IMR-90 (cell line): ENCODE measurements at regions of chr12 and their contacts with region 1.

Region 1: DNA sequence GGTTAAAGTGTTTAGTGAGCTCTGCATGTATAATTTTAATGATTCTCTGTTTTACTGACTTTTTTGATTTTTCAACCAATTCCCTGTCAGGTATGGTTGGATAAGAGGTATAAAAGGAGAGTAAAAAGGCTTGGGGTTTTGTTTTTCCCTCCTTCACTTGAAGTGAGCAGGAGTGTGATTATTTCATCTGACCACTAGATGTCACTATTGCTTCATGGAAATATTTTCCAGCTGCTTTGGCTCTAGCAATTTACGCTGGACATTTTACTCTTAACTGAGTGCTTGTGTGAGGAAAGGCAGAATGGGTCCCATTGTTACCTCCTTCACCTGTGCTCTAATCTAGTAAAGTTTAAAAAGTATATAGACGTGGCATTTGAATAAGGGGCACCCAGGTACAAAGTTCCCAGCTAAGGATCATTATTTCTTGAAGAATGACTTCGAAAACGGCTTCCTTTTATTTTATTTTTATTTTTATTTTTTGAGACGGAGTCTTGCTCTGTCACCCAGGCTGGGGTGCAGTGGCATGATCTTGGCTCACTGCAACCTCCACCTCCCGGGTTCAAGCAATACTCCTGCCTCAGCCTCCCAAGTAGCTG is 66.5 kb downstream of the TBC1D30 start:
- DNase-seq: peak; percentile 70
- ATAC-seq: peak; percentile 67
- H3K4me3 ChIP-seq: no peak overlapping the region
- H3K27ac ChIP-seq: no peak overlapping the region
- H3K4me1 ChIP-seq: peaks cover 5% of the 10 kb centered on the region; the same call in 1 of the 2 replicates
- H3K27me3 ChIP-seq: peaks cover 14% of the 10 kb centered on the region; the same call in 1 of the 2 replicates
- CTCF ChIP-seq: peak; percentile 85
- POLR2A ChIP-seq: no peak
- RAD21 ChIP-seq: peak; percentile 92

Region 2: DNA sequence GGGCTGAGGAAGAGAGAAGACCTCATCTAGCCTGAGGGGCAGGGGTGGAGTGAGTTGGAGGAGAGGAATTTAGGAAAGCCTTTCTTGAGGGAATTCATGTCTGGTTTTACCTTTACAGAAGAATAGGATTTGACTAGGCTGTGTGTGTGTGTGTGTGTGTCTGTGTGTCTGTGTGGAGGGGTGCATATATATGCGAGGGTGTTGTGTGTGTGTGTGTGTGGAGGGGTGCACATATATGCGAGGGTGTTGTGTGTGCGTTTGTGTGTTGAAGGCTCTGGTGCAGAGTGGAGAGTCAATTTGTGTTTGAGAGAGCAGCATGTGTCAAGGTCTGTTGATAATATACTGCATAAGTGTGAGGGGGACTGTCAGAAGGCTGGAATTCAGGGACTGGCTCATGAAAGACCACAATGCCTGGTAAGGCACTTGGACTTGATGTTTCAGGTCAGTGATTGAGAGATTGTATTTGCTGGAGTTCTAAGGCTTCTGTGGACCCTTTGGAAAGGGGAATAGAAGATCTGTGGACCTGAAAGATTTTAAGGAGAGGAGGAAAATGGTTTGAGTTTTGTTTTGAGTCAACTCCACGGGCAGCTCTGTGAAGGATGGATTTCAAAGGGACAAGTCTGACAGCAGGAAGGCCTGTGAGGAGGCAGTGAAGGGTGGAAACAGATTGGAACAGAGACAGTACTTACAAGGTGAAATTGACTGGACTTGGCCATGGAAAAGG is 31.9 kb before region 1 on chr12:
- CTCF ChIA-PET with region 1: no interaction called
- POLR2A ChIA-PET with region 1: no interaction called
- dilution Hi-C with region 1: no loop called
- in situ Hi-C with region 1: no loop called
- intact Hi-C with region 1: no loop called
- DNase-seq: no peak
- ATAC-seq: no peak
- H3K4me3 ChIP-seq: no peak overlapping the region
- H3K27ac ChIP-seq: no peak overlapping the region
- H3K4me1 ChIP-seq: no peaks in the 10 kb centered on the region
- H3K27me3 ChIP-seq: peaks cover 14% of the 10 kb centered on the region
- CTCF ChIP-seq: no peak
- POLR2A ChIP-seq: no peak
- RAD21 ChIP-seq: no peak

Region 3: GRCh38 chr12:65121049-65121955 is 230.3 kb after region 1 on chr12 and contains the start of gene WIF1:
- CTCF ChIA-PET with region 1: interaction called, 3 read pairs
- POLR2A ChIA-PET with region 1: no interaction called
- dilution Hi-C with region 1: no loop called
- in situ Hi-C with region 1: no loop called
- intact Hi-C with region 1: loop called (anchors 1 kb)
- DNase-seq: no peak
- ATAC-seq: peak; percentile 51
- H3K4me3 ChIP-seq: peak within 1 kb of the TSS; percentile 25; the same call in 1 of the 2 replicates
- H3K27ac ChIP-seq: no peak within 1 kb of the TSS
- H3K4me1 ChIP-seq: peaks cover 3% of the 10 kb centered on the region
- H3K27me3 ChIP-seq: peaks cover 49% of the 10 kb centered on the region
- CTCF ChIP-seq: peak; percentile 32; the same call in 1 of the 2 replicates
- POLR2A ChIP-seq: no peak
- RAD21 ChIP-seq: no peak
- total RNA-seq, gene WIF1: not detected in 2 replicates

Region 4: GRCh38 chr12:65278576-65279368 is 387.8 kb after region 1 on chr12 and contains the start of gene MSRB3:
- CTCF ChIA-PET with region 1: no interaction called
- POLR2A ChIA-PET with region 1: no interaction called
- dilution Hi-C with region 1: no loop called
- in situ Hi-C with region 1: no loop called
- intact Hi-C with region 1: loop called (anchors 5 kb)
- DNase-seq: peak; percentile 70
- ATAC-seq: peak; percentile 90
- H3K4me3 ChIP-seq: peak within 1 kb of the TSS; percentile 99
- H3K27ac ChIP-seq: peak within 1 kb of the TSS; percentile 100
- H3K4me1 ChIP-seq: peaks cover 7% of the 10 kb centered on the region
- H3K27me3 ChIP-seq: no peaks in the 10 kb centered on the region
- CTCF ChIP-seq: no peak
- POLR2A ChIP-seq: no peak; the same call in 1 of the 2 replicates
- RAD21 ChIP-seq: no peak
- total RNA-seq, gene MSRB3: 31.7 and 40.8 TPM in 2 replicates

Region 5: GRCh38 chr12:65313719-65314317 is 422.8 kb after region 1 on chr12:
- CTCF ChIA-PET with region 1: no interaction called
- POLR2A ChIA-PET with region 1: no interaction called
- dilution Hi-C with region 1: no loop called
- in situ Hi-C with region 1: no loop called
- intact Hi-C with region 1: no loop called
- DNase-seq: peak; percentile 47
- ATAC-seq: peak; percentile 32; the same call in 1 of the 2 replicates
- H3K4me3 ChIP-seq: no peak overlapping the region
- H3K27ac ChIP-seq: no peak overlapping the region
- H3K4me1 ChIP-seq: 0 out of 2 replicates have a peak, but pooled peaks cover 1% of the 10 kb centered on the region
- H3K27me3 ChIP-seq: no peaks in the 10 kb centered on the region
- CTCF ChIP-seq: peak; percentile 62
- POLR2A ChIP-seq: no peak
- RAD21 ChIP-seq: peak; percentile 74

Region 6: DNA sequence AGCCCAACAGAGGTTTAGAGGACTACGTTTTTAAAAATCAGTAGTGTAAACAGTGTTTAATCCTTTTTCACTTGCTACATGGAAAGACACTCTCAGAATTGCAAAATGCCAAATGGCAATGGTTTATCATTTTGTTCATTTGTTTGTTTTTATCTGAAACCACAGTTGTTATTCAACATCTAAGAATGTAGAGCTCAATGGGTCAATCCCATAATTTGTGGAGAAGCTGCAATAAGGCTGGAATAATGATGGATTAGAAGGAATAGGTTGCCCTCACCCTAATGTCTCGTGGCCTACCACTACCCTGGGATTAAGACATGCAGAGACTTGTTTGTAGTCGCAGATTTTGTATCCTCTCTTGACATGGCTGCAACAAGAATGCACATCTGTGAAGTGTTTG is 1123.8 kb after region 1 on chr12:
- CTCF ChIA-PET with region 1: no interaction called
- POLR2A ChIA-PET with region 1: no interaction called
- dilution Hi-C with region 1: no loop called
- in situ Hi-C with region 1: loop called (anchors 25 kb)
- intact Hi-C with region 1: no loop called
- DNase-seq: peak; percentile 71
- ATAC-seq: peak; percentile 59
- H3K4me3 ChIP-seq: no peak overlapping the region
- H3K27ac ChIP-seq: peak overlapping the region; percentile 18; the same call in 1 of the 2 replicates
- H3K4me1 ChIP-seq: peaks cover 17% of the 10 kb centered on the region
- H3K27me3 ChIP-seq: peaks cover 4% of the 10 kb centered on the region; the same call in 1 of the 2 replicates
- CTCF ChIP-seq: no peak
- POLR2A ChIP-seq: no peak
- RAD21 ChIP-seq: no peak

Region 7: DNA sequence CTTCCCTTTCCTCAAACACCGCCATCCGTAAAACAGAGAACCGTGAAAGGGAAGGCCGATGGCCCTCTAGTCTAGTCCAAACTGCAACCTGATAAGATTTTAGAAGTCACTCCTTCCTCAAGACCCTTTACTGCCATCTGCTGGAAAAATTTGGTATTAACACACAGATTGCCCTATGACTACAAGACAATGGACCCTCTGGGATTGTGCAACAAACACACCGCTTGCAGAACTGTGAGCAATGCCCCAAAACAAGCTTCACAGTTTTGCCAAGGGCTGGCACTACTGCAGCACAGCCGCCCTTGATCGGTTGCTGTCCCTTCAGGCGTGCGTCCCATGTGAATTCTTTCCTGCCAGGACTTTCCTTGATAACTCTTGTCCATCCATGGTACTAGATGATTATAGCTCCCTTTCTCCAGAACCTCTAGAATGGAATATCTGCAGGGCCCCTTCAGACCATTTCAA is 1216.5 kb after region 1 on chr12:
- CTCF ChIA-PET with region 1: no interaction called
- POLR2A ChIA-PET with region 1: no interaction called
- dilution Hi-C with region 1: no loop called
- in situ Hi-C with region 1: loop called (anchors 10 kb)
- intact Hi-C with region 1: loop called (anchors 1 kb)
- DNase-seq: peak; percentile 94
- ATAC-seq: peak; percentile 99
- H3K4me3 ChIP-seq: no peak overlapping the region
- H3K27ac ChIP-seq: no peak overlapping the region
- H3K4me1 ChIP-seq: peaks cover 4% of the 10 kb centered on the region
- H3K27me3 ChIP-seq: no peaks in the 10 kb centered on the region
- CTCF ChIP-seq: peak; percentile 77
- POLR2A ChIP-seq: no peak
- RAD21 ChIP-seq: peak; percentile 79

Region 8: GRCh38 chr12:66693901-66694675 is 1803.1 kb after region 1 on chr12:
- CTCF ChIA-PET with region 1: no interaction called
- POLR2A ChIA-PET with region 1: no interaction called
- dilution Hi-C with region 1: no loop called
- in situ Hi-C with region 1: no loop called
- intact Hi-C with region 1: loop called (anchors 1 kb)
- DNase-seq: peak; percentile 69
- ATAC-seq: peak; percentile 90
- H3K4me3 ChIP-seq: no peak overlapping the region
- H3K27ac ChIP-seq: no peak overlapping the region
- H3K4me1 ChIP-seq: no peaks in the 10 kb centered on the region
- H3K27me3 ChIP-seq: peaks cover 2% of the 10 kb centered on the region; the same call in 1 of the 2 replicates
- CTCF ChIP-seq: peak; percentile 59
- POLR2A ChIP-seq: no peak
- RAD21 ChIP-seq: peak; percentile 61